ENCODE measurements at regions of chr14 and their contacts with region 1.

Region 1: DNA sequence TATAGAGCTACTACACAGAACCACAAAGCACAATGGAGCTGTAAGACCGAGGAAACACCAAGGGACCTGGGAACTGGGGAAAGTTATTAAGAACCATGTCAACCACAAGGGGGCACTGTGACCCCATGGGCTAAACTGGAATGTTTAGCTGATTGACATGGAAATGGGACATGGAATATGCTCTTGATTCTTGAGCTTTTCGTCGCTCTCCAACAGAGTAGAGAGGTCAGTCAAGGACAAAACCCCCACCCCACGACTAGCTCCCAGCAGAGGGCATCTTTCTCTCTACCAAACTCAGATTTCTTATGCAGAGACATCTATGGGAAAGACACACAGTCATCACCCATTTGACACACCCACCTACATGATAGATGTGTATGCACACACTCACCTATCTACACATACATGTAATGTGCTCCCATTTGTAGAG is 10.1 kb downstream of the NDRG2 start:
- DNase-seq: peak; percentile 66 to 86 (median 75)
- H3K4me3 ChIP-seq: no peak overlapping the region
- H3K4me3 Mint-ChIP-seq: no peak overlapping the region
- H3K27ac ChIP-seq: no peak overlapping the region
- H3K27ac Mint-ChIP-seq: peak overlapping the region in 1 of 8 donors; percentile 8
- H3K4me1 ChIP-seq: no peaks in the 10 kb centered on the region
- H3K4me1 Mint-ChIP-seq: no peaks in the 10 kb centered on the region
- H3K27me3 ChIP-seq: no peaks in the 10 kb centered on the region
- H3K27me3 Mint-ChIP-seq: peaks cover 14 to 23% of the 10 kb centered on the region in 2 donors

Region 2: GRCh38 chr14:20956376-20956976 is 58.3 kb before region 1 on chr14:
- CTCF ChIA-PET with region 1: no interaction called
- POLR2A ChIA-PET with region 1: no interaction called
- DNase-seq: peak in 1 of 5 donors; percentile 11
- H3K4me3 ChIP-seq: no peak overlapping the region
- H3K4me3 Mint-ChIP-seq: no peak overlapping the region
- H3K27ac ChIP-seq: no peak overlapping the region
- H3K27ac Mint-ChIP-seq: no peak overlapping the region
- H3K4me1 ChIP-seq: peaks cover 5% of the 10 kb centered on the region
- H3K4me1 Mint-ChIP-seq: peaks cover 7 to 25% (median 18%) of the 10 kb centered on the region in 3 donors
- H3K27me3 ChIP-seq: no peaks in the 10 kb centered on the region
- H3K27me3 Mint-ChIP-seq: peaks cover 14 to 51% of the 10 kb centered on the region in 2 donors

Region 3: GRCh38 chr14:20986811-20987210 is 28.0 kb before region 1 on chr14:
- CTCF ChIA-PET with region 1: no interaction called
- POLR2A ChIA-PET with region 1: no interaction called
- DNase-seq: no peak
- H3K4me3 ChIP-seq: no peak overlapping the region
- H3K4me3 Mint-ChIP-seq: peak overlapping the region in 2 of 7 donors; percentile 20 to 71
- H3K27ac ChIP-seq: no peak overlapping the region
- H3K27ac Mint-ChIP-seq: no peak overlapping the region
- H3K4me1 ChIP-seq: peaks cover 21% of the 10 kb centered on the region
- H3K4me1 Mint-ChIP-seq: peaks cover 20 to 26% (median 22%) of the 10 kb centered on the region in 3 donors
- H3K27me3 ChIP-seq: no peaks in the 10 kb centered on the region
- H3K27me3 Mint-ChIP-seq: peaks cover 0 to 13% of the 10 kb centered on the region in 2 donors

Region 4: DNA sequence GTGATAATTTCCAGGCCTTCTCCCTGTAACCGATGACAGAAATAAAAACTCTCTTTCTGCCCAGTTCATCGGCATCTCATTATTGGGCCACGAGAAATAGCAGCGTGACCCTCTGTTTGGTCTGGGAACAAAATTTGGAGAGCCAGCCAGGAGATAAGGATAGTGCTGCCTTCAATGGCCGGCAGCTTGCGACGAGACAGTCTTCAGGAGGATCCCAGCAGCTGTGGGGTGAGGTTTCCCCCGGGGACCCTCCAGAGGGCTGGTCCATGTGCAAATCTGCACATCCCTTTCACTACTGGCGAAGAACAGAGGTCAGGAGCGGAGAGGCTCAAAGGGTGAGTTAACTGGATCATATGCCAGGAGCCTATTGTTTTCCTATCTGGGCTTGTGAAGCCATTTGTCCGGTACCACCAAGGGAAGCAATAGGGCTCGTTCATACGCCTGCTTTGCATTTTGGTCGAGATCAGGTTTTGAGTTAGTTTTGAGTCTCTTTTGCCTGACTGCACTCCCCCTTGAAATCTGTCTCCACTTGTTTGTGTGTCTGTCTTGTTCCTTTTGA is 10.9 kb before region 1 on chr14:
- CTCF ChIA-PET with region 1: interaction called, 23 read pairs
- POLR2A ChIA-PET with region 1: no interaction called
- DNase-seq: no peak
- H3K4me3 ChIP-seq: no peak overlapping the region
- H3K4me3 Mint-ChIP-seq: no peak overlapping the region
- H3K27ac ChIP-seq: no peak overlapping the region
- H3K27ac Mint-ChIP-seq: no peak overlapping the region
- H3K4me1 ChIP-seq: no peaks in the 10 kb centered on the region
- H3K4me1 Mint-ChIP-seq: no peaks in the 10 kb centered on the region
- H3K27me3 ChIP-seq: no peaks in the 10 kb centered on the region
- H3K27me3 Mint-ChIP-seq: peaks cover 3 to 6% of the 10 kb centered on the region in 2 donors

Region 5: GRCh38 chr14:21039585-21040369 is 25.0 kb after region 1 on chr14:
- CTCF ChIA-PET with region 1: interaction called, 133 read pairs
- POLR2A ChIA-PET with region 1: interaction called, 6 read pairs
- DNase-seq: peak in 3 of 5 donors; percentile 24 to 53 (median 53)
- H3K4me3 ChIP-seq: no peak overlapping the region
- H3K4me3 Mint-ChIP-seq: no peak overlapping the region
- H3K27ac ChIP-seq: no peak overlapping the region
- H3K27ac Mint-ChIP-seq: no peak overlapping the region
- H3K4me1 ChIP-seq: peaks cover 6% of the 10 kb centered on the region
- H3K4me1 Mint-ChIP-seq: peaks cover 6 to 8% (median 8%) of the 10 kb centered on the region in 3 donors
- H3K27me3 ChIP-seq: no peaks in the 10 kb centered on the region
- H3K27me3 Mint-ChIP-seq: peaks cover 12 to 30% of the 10 kb centered on the region in 2 donors

Region 6: DNA sequence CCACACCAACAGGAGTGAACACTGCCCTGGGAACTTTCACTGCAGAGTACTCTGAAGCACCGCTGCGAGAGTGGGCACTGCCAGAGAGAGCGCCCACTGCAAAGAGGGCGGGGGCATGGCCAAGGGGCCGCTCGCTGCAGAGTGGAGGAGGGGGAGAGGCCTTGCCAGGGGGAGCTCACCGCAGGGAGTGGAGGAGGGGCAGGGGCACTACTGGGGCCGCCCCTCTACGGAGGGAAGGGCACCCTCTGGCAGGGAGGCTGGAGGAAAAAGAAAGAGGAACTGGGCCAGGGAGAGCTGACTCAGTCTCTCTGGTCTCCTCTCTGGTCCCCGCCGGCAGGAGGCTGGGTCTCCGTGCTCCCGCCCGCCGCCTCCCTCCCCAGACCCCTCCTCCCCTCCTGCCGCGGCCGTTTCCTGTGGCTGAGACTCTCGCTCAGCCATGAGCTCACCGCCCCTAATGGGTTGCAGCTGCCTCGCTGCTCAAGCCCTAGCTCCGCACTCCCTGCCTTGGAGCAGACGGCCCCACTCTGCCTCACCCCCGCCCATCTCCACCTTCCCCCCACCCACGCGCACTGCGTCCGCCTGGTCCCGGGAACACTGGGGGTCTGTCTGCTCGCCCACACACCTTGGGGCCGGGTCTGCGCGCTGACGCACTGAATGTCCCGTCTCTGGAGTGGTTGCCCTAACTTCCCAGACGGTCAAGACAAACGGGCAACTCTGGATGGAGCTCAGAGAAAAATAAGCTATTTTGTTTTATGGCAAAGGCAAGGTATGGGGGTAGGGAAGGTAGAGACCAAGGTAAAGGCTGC is 56.7 kb after region 1 on chr14:
- CTCF ChIA-PET with region 1: interaction called, 38 read pairs
- POLR2A ChIA-PET with region 1: no interaction called
- DNase-seq: peak in 4 of 5 donors; percentile 30 to 70 (median 40)
- H3K4me3 ChIP-seq: peak overlapping the region; percentile 60
- H3K4me3 Mint-ChIP-seq: peak overlapping the region; percentile 81 to 91 (median 86)
- H3K27ac ChIP-seq: peak overlapping the region; percentile 31
- H3K27ac Mint-ChIP-seq: peak overlapping the region in 7 of 8 donors; percentile 56 to 91 (median 88)
- H3K4me1 ChIP-seq: peaks cover 36% of the 10 kb centered on the region
- H3K4me1 Mint-ChIP-seq: peaks cover 23 to 40% (median 29%) of the 10 kb centered on the region in 3 donors
- H3K27me3 ChIP-seq: peaks cover 60% of the 10 kb centered on the region
- H3K27me3 Mint-ChIP-seq: peaks cover 51 to 64% of the 10 kb centered on the region in 2 donors

Region 7: GRCh38 chr14:21092273-21093011 is 77.7 kb after region 1 on chr14:
- CTCF ChIA-PET with region 1: interaction called, 152 read pairs
- POLR2A ChIA-PET with region 1: interaction called, 3 read pairs
- DNase-seq: peak; percentile 86 to 93 (median 88)
- H3K4me3 ChIP-seq: no peak overlapping the region
- H3K4me3 Mint-ChIP-seq: no peak overlapping the region
- H3K27ac ChIP-seq: no peak overlapping the region
- H3K27ac Mint-ChIP-seq: peak overlapping the region in 7 of 8 donors; percentile 52 to 94 (median 86)
- H3K4me1 ChIP-seq: peaks cover 9% of the 10 kb centered on the region
- H3K4me1 Mint-ChIP-seq: peaks cover 19 to 34% (median 23%) of the 10 kb centered on the region in 3 donors
- H3K27me3 ChIP-seq: no peaks in the 10 kb centered on the region
- H3K27me3 Mint-ChIP-seq: no peaks in the 10 kb centered on the region

Measured in CD8-positive, alpha-beta memory T cell (primary cell).